Transverse colon (tissue), 4 donors: ENCODE measurements at regions of chr15 and their contacts with region 1.

Region 1: GRCh38 chr15:42059661-42060476 is 34.5 kb downstream of the PLA2G4D start:
- DNase-seq: peak; percentile 70
- H3K4me3 ChIP-seq: no peak overlapping the region
- H3K27ac ChIP-seq: no peak overlapping the region
- H3K4me1 ChIP-seq: peaks cover 4 to 12% (median 6%) of the 10 kb centered on the region in 4 donors
- H3K27me3 ChIP-seq: no peaks in the 10 kb centered on the region
- CTCF ChIP-seq: peak; percentile 86 to 90 (median 89)
- EP300 ChIP-seq: no peak
- POLR2A ChIP-seq: no peak

Region 2: GRCh38 chr15:42032376-42033213 is 27.3 kb before region 1 on chr15:
- in situ Hi-C with region 1: no loop called
- intact Hi-C with region 1: loop called (anchors 1 kb)
- DNase-seq: no peak
- H3K4me3 ChIP-seq: no peak overlapping the region
- H3K27ac ChIP-seq: no peak overlapping the region
- H3K4me1 ChIP-seq: peaks cover 6 to 22% (median 10%) of the 10 kb centered on the region in 4 donors
- H3K27me3 ChIP-seq: no peaks in the 10 kb centered on the region
- CTCF ChIP-seq: no peak
- EP300 ChIP-seq: no peak
- POLR2A ChIP-seq: no peak

Region 3: DNA sequence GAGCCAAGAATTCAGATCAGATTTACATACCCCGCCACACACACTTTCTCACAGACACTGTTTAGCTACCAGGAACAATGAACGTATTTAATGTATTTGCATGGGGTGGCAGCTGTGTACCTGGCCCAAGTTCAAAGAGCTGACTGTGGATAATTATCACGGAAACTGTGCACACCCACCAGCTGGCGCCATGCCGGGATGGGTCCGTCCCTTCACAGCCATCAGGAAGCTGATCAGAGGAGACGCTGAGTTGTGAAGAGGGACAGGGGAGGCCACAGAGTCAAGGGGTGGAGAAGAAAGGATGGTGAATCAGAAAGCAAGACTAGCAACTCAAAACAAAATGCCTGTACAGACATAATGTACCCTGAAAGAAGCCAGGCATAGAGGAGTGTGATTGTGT is 47.6 kb after region 1 on chr15:
- in situ Hi-C with region 1: no loop called
- intact Hi-C with region 1: no loop called
- DNase-seq: peak; percentile 92
- H3K4me3 ChIP-seq: no peak overlapping the region
- H3K27ac ChIP-seq: peak overlapping the region; percentile 13 to 46 (median 32)
- H3K4me1 ChIP-seq: peaks cover 7 to 32% (median 15%) of the 10 kb centered on the region in 4 donors
- H3K27me3 ChIP-seq: no peaks in the 10 kb centered on the region
- CTCF ChIP-seq: no peak
- EP300 ChIP-seq: no peak
- POLR2A ChIP-seq: peak; percentile 23

Region 4: DNA sequence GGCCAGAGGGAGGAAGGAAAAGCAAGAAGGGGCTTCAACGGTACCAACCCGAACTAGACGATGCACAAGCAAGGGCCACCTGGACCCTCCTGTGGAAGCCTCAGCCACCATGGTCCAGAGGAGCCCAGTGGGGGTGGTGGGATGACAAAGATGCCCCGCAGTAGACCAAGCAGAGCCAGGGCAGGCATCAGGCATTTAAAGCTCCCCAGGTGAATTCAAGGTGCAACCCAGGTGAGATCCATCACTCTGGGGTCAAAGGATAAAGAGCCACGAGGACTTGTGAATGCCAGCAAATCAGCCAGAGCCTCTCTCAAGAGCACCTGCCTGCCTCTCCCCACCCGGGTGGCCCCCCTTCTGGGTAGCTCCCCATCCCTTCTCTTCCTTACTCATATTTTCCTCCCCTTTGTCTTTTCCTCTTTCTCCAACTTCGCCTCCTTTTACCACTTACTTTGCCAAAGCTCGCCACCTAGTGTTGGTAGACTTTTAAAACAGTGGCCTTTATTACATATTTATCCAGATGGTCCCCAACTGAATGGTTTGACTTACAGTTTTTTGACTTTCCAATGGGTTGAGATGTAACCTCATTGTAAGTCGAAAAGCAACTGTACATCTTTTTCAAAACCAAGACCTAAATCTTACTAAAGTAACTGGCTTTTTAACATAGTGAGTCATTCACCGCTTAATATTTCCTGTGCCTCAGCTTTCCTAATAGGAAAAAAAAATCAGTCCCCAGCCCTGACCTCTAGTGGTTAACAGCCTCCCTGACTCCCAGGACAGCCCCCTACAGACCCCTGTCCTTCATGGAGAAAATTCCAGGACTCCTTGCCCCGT is 77.8 kb after region 1 on chr15:
- in situ Hi-C with region 1: loop called in 1 of 4 experiments (anchors 10 kb)
- intact Hi-C with region 1: no loop called
- DNase-seq: no peak
- H3K4me3 ChIP-seq: no peak overlapping the region
- H3K27ac ChIP-seq: no peak overlapping the region
- H3K4me1 ChIP-seq: peaks cover 0 to 28% (median 14%) of the 10 kb centered on the region in 4 donors
- H3K27me3 ChIP-seq: no peaks in the 10 kb centered on the region
- CTCF ChIP-seq: peak in 3 of 5 experiments; percentile 21 to 39 (median 29)
- EP300 ChIP-seq: no peak
- POLR2A ChIP-seq: no peak